ENCODE measurements at regions of chr11 and their contacts with region 1.

Region 1: DNA sequence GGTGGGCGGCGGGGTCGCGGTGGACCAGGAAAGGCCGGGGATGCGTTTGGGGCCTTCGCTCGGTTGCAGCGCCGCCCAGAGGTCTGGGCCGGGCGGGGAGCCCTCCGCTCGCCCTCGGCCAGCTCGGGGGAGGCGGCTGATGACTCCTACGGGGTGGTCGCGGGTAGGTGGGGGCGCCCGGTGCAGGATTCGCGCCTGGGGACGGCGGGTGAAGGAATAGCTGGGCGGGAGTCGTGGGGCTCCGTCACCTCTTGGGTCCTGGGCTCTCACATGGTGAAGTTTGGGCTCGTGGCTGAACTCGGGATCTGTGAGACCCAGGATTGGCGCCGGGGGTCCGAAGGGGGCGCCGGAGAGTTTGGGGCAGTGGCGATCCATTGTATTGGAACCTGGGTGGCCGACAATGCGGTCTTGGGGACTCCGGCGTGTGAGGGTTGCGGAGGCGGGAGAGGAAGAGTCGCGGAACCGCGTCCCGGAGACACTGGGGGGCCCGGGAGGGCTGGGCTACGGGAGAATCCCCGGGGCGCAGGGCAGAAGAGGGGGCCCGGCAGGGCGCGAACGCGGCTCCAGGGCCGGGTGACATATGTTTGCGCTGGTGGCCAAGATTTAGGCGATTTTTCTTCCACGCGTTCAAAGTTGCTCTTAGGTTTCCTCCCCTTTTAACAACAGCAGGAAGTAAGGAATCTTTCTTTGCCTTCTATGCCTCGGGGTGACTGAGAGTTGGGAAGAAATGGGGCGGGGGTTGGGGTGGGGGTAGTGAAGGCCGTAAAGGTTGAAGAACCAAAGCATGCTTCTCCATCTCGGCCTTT is 935 bp downstream of the QSER1 start:
- DNase-seq: peak; percentile 63
- H3K4me3 Mint-ChIP-seq: peak overlapping the region; percentile 97
- H3K27ac Mint-ChIP-seq: peak overlapping the region; percentile 96
- H3K4me1 Mint-ChIP-seq: peaks cover 42% of the 10 kb centered on the region
- H3K27me3 Mint-ChIP-seq: no peaks in the 10 kb centered on the region

Region 2: DNA sequence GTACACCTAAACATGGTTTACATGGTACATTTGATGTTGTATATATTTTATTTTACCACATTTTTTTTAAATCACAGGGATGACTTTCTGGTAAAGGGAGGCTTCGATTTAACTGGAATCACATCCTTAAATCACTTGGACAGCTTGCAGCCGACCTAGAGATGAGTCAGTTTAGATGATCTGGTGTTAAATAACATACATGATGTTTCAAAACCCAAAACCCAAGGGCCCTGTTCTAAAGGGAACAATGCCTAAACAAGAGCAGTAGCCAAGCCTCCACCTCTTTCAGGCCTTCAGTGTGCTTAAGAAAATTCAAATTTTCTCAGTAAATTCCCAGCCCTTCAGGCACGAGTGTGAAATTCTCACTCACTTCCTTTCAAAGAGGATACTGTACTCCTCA is 567.0 kb before region 1 on chr11:
- CTCF ChIA-PET with region 1: no interaction called
- intact Hi-C with region 1: loop called (anchors 5 kb)
- DNase-seq: no peak
- H3K4me3 Mint-ChIP-seq: no peak overlapping the region
- H3K27ac Mint-ChIP-seq: no peak overlapping the region
- H3K4me1 Mint-ChIP-seq: no peaks in the 10 kb centered on the region
- H3K27me3 Mint-ChIP-seq: peaks cover 17% of the 10 kb centered on the region

Region 3: GRCh38 chr11:32821517-32821916 is 72.0 kb before region 1 on chr11:
- CTCF ChIA-PET with region 1: no interaction called
- intact Hi-C with region 1: loop called (anchors 1 kb)
- DNase-seq: peak; percentile 10
- H3K4me3 Mint-ChIP-seq: no peak overlapping the region
- H3K27ac Mint-ChIP-seq: peak overlapping the region; percentile 4
- H3K4me1 Mint-ChIP-seq: peaks cover 25% of the 10 kb centered on the region
- H3K27me3 Mint-ChIP-seq: no peaks in the 10 kb centered on the region

Region 4: DNA sequence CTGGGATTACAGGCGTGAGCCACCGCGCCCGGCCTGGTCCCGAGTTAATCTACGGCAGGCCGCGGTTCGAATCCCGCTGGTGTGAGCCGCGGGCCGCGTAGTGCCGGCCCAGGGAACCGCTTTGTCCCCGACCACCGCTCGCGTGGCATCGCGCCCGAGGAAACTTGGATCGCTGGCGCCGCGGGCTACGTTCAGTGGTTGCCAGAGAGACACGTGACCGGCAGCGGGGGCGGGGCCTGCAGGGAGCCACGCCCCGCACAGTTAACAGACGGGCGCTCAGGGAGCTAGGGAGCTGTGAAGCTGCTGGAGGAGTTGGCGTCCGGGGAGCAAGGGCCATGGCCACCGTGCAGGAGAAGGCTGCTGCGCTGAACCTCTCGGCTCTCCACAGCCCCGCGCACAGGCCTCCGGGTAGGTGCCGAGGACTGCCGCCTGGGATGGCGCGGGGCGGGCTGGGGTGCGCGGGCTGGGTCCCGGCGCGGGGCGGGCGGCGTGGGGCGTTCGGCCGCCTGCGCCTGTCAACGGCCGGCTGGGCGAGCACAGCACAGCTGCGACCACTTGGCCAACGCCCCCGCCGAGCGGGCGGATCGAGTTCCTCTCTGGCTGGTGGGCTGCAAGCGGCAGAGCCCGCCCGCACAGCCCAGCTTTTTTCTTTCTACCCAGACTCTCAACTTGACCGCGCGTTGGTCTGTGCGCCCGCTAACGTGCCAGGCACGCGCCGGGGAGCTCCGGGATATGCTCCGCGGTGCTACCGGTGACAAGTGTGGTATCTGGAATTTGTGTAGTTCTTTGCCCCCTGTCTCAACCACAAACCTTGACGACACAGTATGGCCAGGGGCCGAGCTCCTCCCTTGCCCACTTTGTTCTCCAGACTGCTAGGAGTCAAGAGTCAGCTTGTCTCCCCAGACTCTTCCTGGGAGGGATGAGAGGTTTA is 122.3 kb after region 1 on chr11 and contains the start of gene DEPDC7:
- CTCF ChIA-PET with region 1: interaction called, 6 read pairs
- intact Hi-C with region 1: loop called (anchors 1 kb)
- DNase-seq: peak; percentile 84
- H3K4me3 Mint-ChIP-seq: peak within 1 kb of the TSS; percentile 84
- H3K27ac Mint-ChIP-seq: no peak within 1 kb of the TSS
- H3K4me1 Mint-ChIP-seq: peaks cover 53% of the 10 kb centered on the region
- H3K27me3 Mint-ChIP-seq: peaks cover 9% of the 10 kb centered on the region
- total RNA-seq, gene DEPDC7: 2.2 to 2.5 TPM

Region 5: GRCh38 chr11:33161120-33162005 is 267.8 kb after region 1 on chr11 and contains the start of gene CSTF3:
- CTCF ChIA-PET with region 1: interaction called, 3 read pairs
- intact Hi-C with region 1: loop called (anchors 1 kb)
- DNase-seq: peak; percentile 99
- H3K4me3 Mint-ChIP-seq: peak within 1 kb of the TSS; percentile 100
- H3K27ac Mint-ChIP-seq: peak within 1 kb of the TSS; percentile 99
- H3K4me1 Mint-ChIP-seq: peaks cover 42% of the 10 kb centered on the region
- H3K27me3 Mint-ChIP-seq: no peaks in the 10 kb centered on the region
- total RNA-seq, gene CSTF3: 26.5 to 27.3 TPM

Region 6: DNA sequence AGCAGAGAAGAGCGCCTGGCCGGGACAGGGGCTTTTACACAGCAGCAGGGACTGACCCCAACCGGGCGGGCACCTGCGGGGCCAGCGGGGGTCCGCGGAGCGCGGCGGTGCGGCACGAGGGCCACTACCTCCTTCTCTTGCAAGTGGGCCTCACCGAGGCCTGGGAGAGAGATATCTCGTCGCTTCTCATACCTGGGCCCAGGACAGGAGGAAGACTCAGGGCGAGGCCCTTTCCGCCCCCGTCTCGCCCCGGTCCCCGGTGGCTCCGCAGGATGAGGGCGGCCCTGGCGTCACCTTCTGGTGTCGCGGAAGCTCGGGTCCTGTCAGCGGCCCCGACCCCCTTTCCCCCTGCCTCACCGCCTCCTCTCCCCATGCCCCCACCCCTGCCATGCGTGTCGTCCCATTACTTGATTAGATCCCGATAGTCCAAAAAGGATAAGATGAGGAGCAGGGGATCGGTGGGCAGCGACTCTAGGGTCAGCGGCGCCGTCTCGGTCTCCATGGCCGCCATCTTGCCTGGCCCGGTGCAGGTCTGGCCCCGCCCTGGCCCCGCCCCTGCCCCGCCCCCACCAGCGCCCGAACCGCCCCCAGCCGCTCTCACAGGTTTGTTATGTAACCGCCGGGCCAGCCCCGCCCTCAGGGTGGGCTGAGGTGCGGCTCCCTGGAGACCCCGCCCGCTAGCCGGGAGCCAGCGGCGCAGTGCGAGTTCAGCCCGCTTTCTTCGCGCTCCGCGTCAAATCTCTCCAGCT is 880.6 kb after region 1 on chr11 and contains the start of gene FBXO3:
- CTCF ChIA-PET with region 1: no interaction called
- intact Hi-C with region 1: loop called (anchors 10 kb)
- DNase-seq: peak; percentile 82
- H3K4me3 Mint-ChIP-seq: peak within 1 kb of the TSS; percentile 90
- H3K27ac Mint-ChIP-seq: peak within 1 kb of the TSS; percentile 85
- H3K4me1 Mint-ChIP-seq: peaks cover 40% of the 10 kb centered on the region
- H3K27me3 Mint-ChIP-seq: peaks cover 12% of the 10 kb centered on the region
- total RNA-seq, gene FBXO3: 12.2 to 12.9 TPM